Posterior vena cava (tissue), 2 donors: ENCODE measurements at regions of chr6 and their contacts with region 1.

Region 1: DNA sequence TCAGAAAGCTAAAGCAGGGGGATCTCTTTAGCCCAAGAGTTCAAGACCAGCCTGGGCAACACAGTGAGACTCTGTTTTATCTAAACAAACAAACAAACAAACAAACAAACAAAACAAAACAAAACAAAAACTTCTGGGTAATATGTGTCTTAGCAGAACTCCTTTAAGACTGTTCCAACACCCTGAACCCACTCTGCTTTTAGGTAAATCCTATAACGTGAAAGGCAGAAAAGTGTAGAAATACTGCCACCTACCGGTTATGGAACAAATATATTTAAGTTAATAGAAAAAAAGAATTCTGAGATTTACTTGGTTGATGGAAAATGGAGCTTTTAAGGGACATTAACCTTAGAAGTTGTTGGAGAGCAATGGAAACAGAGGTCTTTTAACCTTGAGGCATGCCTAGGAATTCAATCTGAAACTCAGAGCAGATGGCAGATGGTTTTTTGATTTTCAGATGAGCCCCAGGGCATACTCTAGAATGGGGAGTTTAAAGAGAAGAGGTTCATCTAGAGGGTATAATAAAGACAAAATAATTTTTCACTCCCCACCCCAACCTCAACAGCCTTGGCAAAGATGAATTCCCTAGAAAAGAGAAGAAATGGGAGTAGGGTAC is 38.5 kb downstream of the SOD2 start:
- DNase-seq: no peak

Region 2: GRCh38 chr6:159174263-159174969 is 480.2 kb before region 1 on chr6:
- intact Hi-C with region 1: loop called (anchors 5 kb)
- DNase-seq: peak; percentile 93

Region 3: DNA sequence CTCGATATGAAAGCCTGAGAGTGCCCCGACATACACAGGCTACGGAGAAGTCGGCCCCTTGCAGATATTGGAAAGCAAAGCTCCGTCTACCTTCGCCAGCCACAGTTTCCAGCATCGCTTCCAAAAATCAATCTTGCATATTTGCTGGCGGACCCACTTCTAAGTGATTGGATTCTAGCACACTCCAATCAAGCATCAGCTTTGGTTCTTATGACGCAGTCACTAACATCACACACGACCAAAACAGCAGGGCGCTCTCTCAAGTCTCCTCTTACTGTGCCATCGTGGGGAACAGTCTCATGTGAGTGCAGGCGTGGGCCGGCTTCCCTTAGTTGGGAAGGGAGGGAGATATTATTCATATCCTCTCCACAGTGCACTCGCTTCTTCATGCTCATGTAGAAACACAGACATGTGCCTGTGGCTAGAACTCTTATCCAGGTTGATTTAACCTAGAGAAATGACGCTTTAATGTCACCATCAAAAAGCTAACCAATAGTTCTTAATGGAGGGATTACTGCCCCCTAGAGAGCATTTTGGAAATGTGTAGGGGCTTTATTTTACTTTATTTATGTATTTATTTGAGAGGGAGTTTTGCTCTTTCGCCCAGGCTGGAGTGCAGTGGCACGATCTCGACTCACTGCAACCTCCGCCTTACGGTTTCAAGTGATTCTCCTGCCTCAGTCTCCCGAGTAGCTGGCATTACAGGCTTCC is 191.3 kb before region 1 on chr6:
- intact Hi-C with region 1: loop called in 1 of 2 experiments (anchors 10 kb)
- DNase-seq: no peak

Region 4: GRCh38 chr6:159595173-159595572 is 59.4 kb before region 1 on chr6:
- intact Hi-C with region 1: loop called in 1 of 2 experiments (anchors 10 kb)
- DNase-seq: no peak